Heart left ventricle (tissue), 16 donors: ENCODE measurements at regions of chr16 and their contacts with region 1.

Region 1: DNA sequence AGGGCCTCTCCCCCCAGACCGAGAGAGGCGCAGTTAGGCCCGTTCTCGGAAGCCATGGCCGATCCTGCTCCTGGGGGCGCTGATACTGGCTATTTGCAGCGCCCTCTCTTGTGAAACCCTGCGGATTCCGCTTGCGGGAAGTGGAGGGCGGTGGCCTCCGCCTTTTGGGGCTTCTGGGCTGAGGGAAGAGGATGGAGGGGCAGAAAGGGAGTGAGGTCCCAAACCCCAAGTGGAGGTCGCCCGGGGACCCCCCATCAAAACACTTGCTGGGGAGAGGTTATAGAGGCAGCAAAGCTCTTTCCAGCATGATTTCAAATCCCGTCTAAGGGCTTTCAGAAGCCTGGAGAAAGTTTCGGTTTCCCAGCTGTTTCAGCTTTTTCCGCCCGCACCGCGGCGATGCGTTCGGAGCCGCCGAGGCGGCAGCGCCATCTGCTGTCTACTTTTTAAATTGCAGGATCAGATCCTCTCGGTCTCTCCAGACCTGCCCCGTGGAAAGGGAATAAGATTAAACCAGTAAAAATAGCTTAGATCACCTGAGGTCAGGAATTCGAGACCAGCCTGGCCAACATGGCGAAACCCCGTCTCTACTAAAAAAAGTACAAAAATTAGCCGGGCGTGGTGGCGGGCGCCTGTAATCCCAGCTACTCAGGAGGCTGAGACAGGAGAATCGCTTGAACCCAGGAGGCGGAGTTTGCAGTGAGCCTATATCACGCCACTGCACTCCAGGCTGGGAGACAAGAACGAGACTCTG is 15.8 kb downstream of the SNX20 start:
- DNase-seq: peak; percentile 78 to 87 (median 80)
- ATAC-seq: peak; percentile 74 to 88 (median 81)
- H3K4me3 ChIP-seq: peak overlapping the region; percentile 9 to 60 (median 54)
- H3K27ac ChIP-seq: peak overlapping the region in 11 of 12 donors; percentile 49 to 87 (median 74)
- H3K4me1 ChIP-seq: peaks cover 0 to 46% (median 12%) of the 10 kb centered on the region in 12 donors
- H3K27me3 ChIP-seq: no peaks in the 10 kb centered on the region
- CTCF ChIP-seq: peak; percentile 85 to 97 (median 92)
- POLR2A ChIP-seq: no peak

Region 2: GRCh38 chr16:50024684-50025536 is 640.4 kb before region 1 on chr16 and contains the start of gene CNEP1R1:
- intact Hi-C with region 1: loop called in 4 of 10 experiments (anchors 5 to 10 kb)
- DNase-seq: peak; percentile 94 to 96 (median 95)
- ATAC-seq: peak; percentile 100
- H3K4me3 ChIP-seq: peak within 1 kb of the TSS; percentile 64 to 99 (median 90)
- H3K27ac ChIP-seq: peak within 1 kb of the TSS; percentile 51 to 94 (median 82)
- H3K4me1 ChIP-seq: peaks cover 0 to 23% (median 16%) of the 10 kb centered on the region in 12 donors
- H3K27me3 ChIP-seq: peaks cover 0 to 5% (median 0%) of the 10 kb centered on the region in 9 donors
- CTCF ChIP-seq: peak; percentile 99 to 100 (median 100)
- POLR2A ChIP-seq: peak in 1 of 2 donors; percentile 78
- total RNA-seq, gene CNEP1R1: 10.9 to 23.9 (median 17.9) TPM

Region 3: DNA sequence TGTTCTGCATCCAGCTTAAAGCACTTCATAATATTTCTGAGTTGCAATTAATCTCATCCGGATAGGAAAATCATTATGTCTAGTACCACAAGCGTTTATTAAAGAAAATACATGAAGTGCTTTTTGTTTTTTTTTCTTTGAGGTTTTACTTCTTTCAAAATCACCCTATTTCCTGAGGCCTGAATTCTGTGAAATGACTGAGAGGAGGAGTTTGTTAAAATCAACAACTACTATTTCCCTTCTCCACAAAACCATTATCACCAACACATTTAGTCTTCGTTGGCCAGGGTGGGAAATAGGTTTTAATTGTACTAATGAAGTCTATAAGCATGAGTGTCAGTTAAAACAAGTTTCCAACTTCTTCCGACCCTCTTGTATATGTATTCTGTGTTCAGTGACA is 449.6 kb before region 1 on chr16:
- intact Hi-C with region 1: loop called in 7 of 10 experiments (anchors 5 to 10 kb)
- DNase-seq: no peak
- ATAC-seq: no peak
- H3K4me3 ChIP-seq: no peak overlapping the region
- H3K27ac ChIP-seq: no peak overlapping the region
- H3K4me1 ChIP-seq: peaks cover 0 to 9% (median 3%) of the 10 kb centered on the region in 12 donors
- H3K27me3 ChIP-seq: no peaks in the 10 kb centered on the region
- CTCF ChIP-seq: no peak
- POLR2A ChIP-seq: no peak

Region 4: GRCh38 chr16:50245417-50246298 is 419.6 kb before region 1 on chr16:
- intact Hi-C with region 1: loop called in 1 of 10 experiments (anchors 10 kb)
- DNase-seq: peak in 4 of 5 donors; percentile 31 to 61 (median 54)
- ATAC-seq: peak in 3 of 4 donors; percentile 66 to 85 (median 79)
- H3K4me3 ChIP-seq: peak overlapping the region in 11 of 12 donors; percentile 33 to 78 (median 59)
- H3K27ac ChIP-seq: peak overlapping the region in 2 of 12 donors; percentile 12 to 13
- H3K4me1 ChIP-seq: peaks cover 0 to 21% (median 7%) of the 10 kb centered on the region in 12 donors
- H3K27me3 ChIP-seq: peaks cover 0 to 21% (median 0%) of the 10 kb centered on the region in 9 donors
- CTCF ChIP-seq: peak in 8 of 12 donors; percentile 8 to 50 (median 36)
- POLR2A ChIP-seq: no peak

Region 5: GRCh38 chr16:50593410-50594150 is 71.7 kb before region 1 on chr16:
- intact Hi-C with region 1: loop called in 7 of 10 experiments (anchors 2 to 10 kb)
- DNase-seq: peak in 1 of 5 donors; percentile 41
- ATAC-seq: no peak
- H3K4me3 ChIP-seq: no peak overlapping the region
- H3K27ac ChIP-seq: peak overlapping the region in 1 of 12 donors; percentile 53
- H3K4me1 ChIP-seq: peaks cover 0 to 19% (median 10%) of the 10 kb centered on the region in 12 donors
- H3K27me3 ChIP-seq: no peaks in the 10 kb centered on the region
- CTCF ChIP-seq: peak in 9 of 12 donors; percentile 15 to 51 (median 39)
- POLR2A ChIP-seq: no peak

Region 6: DNA sequence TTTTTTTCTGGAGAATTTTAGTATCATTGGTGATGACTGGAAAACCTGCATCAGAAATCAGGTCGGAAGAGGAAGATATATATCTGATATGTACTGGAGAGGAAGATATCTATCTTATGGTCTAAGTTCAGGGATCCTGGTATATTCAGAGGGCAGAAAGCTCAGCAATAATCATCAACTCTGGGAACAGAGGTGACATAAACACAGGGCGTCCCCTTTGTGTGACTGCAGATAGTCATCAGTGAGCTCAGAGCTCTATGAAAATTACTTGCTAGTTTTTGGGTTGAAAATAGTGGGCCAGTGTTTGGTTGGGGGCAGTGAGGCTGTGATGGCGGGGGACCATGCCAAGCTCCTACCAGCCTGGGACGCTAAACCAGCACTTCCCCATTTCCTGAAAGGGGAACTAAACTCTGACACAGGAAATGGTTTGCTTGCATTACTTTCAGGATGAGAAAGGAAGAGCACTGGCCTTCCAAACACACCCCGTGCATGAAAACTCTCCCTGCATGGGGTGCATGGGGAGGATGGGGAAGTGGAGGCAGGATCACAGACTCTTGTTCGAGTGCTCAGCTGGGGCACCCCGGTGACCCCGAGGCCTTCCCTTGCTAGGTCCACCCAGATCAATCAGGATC is 43.9 kb after region 1 on chr16:
- intact Hi-C with region 1: no loop called
- DNase-seq: peak in 1 of 5 donors; percentile 38
- ATAC-seq: peak in 3 of 4 donors; percentile 26 to 42 (median 28)
- H3K4me3 ChIP-seq: no peak overlapping the region
- H3K27ac ChIP-seq: peak overlapping the region in 1 of 12 donors; percentile 85
- H3K4me1 ChIP-seq: peaks cover 0 to 72% (median 5%) of the 10 kb centered on the region in 12 donors
- H3K27me3 ChIP-seq: no peaks in the 10 kb centered on the region
- CTCF ChIP-seq: no peak
- POLR2A ChIP-seq: no peak

Region 7: GRCh38 chr16:50747207-50747956 is 82.1 kb after region 1 on chr16:
- intact Hi-C with region 1: loop called in 3 of 10 experiments (anchors 2 to 5 kb)
- DNase-seq: no peak
- ATAC-seq: peak in 3 of 4 donors; percentile 23 to 64 (median 63)
- H3K4me3 ChIP-seq: peak overlapping the region in 1 of 12 donors; percentile 6
- H3K27ac ChIP-seq: peak overlapping the region in 1 of 12 donors; percentile 97
- H3K4me1 ChIP-seq: peaks cover 0 to 69% (median 25%) of the 10 kb centered on the region in 12 donors
- H3K27me3 ChIP-seq: no peaks in the 10 kb centered on the region
- CTCF ChIP-seq: peak in 11 of 12 donors; percentile 17 to 48 (median 28)
- POLR2A ChIP-seq: no peak

Region 8: GRCh38 chr16:50861970-50862411 is 196.7 kb after region 1 on chr16:
- intact Hi-C with region 1: no loop called
- DNase-seq: no peak
- ATAC-seq: no peak
- H3K4me3 ChIP-seq: no peak overlapping the region
- H3K27ac ChIP-seq: no peak overlapping the region
- H3K4me1 ChIP-seq: no peaks in the 10 kb centered on the region
- H3K27me3 ChIP-seq: peaks cover 0 to 4% (median 0%) of the 10 kb centered on the region in 9 donors
- CTCF ChIP-seq: no peak
- POLR2A ChIP-seq: no peak